ENCODE measurements at regions of chr1 and their contacts with region 1.

Region 1: DNA sequence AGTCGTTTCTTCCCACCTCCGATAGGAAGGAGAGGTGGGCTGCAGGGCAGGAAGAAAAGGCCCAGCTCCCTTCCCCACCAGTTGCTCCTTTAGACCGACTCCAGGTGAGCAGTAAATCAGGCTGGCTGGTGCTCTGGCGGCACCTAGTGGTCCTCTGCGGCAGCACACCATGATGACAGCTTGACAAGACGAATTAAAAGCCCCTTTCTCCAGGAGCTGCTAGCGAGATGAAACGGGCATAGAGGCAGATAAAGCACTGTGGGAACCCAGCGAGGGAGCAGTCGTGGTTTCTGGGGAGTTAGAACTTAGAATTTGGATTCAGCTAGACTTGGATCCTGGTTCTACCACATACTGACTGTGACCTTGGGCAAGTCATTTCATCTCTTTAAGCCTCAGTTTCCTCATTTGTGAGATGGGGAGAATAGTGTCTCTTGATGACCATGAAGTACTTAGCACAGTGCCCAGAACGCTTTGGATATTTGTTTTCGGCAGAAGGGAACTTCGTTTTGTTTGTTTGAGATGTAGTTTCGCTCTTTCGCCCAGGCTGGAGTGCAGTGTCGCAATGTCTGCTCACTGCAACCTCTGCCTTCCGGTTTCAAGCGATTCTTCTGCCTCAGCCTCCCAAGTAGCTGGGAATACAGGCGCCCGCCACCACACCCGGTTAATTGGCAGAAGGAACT is 21.8 kb upstream of the COL9A2 start:
- DNase-seq: peak; percentile 92
- ATAC-seq: peak; percentile 98
- H3K4me3 ChIP-seq: peak overlapping the region in 3 of 5 experiments; percentile 3 to 46 (median 6)
- H3K4me3 Mint-ChIP-seq: peak overlapping the region; percentile 38
- H3K27ac ChIP-seq: no peak overlapping the region
- H3K27ac Mint-ChIP-seq: peak overlapping the region; percentile 28
- H3K4me1 ChIP-seq: peaks cover 25 to 34% of the 10 kb centered on the region in 2 donors
- H3K4me1 Mint-ChIP-seq: peaks cover 39% of the 10 kb centered on the region
- H3K27me3 ChIP-seq: no peaks in the 10 kb centered on the region
- H3K27me3 Mint-ChIP-seq: no peaks in the 10 kb centered on the region
- CTCF ChIP-seq: peak; percentile 98

Region 2: GRCh38 chr1:40090652-40091355 is 248.1 kb before region 1 on chr1:
- CTCF ChIA-PET with region 1: interaction called, 111 read pairs
- POLR2A ChIA-PET with region 1: no interaction called
- intact Hi-C with region 1: no loop called
- DNase-seq: no peak
- ATAC-seq: no peak
- H3K4me3 ChIP-seq: no peak overlapping the region
- H3K4me3 Mint-ChIP-seq: no peak overlapping the region
- H3K27ac ChIP-seq: no peak overlapping the region
- H3K27ac Mint-ChIP-seq: no peak overlapping the region
- H3K4me1 ChIP-seq: peaks cover under 1 to 2% of the 10 kb centered on the region in 2 donors
- H3K4me1 Mint-ChIP-seq: peaks cover 5% of the 10 kb centered on the region
- H3K27me3 ChIP-seq: no peaks in the 10 kb centered on the region
- H3K27me3 Mint-ChIP-seq: no peaks in the 10 kb centered on the region
- CTCF ChIP-seq: no peak

Region 3: DNA sequence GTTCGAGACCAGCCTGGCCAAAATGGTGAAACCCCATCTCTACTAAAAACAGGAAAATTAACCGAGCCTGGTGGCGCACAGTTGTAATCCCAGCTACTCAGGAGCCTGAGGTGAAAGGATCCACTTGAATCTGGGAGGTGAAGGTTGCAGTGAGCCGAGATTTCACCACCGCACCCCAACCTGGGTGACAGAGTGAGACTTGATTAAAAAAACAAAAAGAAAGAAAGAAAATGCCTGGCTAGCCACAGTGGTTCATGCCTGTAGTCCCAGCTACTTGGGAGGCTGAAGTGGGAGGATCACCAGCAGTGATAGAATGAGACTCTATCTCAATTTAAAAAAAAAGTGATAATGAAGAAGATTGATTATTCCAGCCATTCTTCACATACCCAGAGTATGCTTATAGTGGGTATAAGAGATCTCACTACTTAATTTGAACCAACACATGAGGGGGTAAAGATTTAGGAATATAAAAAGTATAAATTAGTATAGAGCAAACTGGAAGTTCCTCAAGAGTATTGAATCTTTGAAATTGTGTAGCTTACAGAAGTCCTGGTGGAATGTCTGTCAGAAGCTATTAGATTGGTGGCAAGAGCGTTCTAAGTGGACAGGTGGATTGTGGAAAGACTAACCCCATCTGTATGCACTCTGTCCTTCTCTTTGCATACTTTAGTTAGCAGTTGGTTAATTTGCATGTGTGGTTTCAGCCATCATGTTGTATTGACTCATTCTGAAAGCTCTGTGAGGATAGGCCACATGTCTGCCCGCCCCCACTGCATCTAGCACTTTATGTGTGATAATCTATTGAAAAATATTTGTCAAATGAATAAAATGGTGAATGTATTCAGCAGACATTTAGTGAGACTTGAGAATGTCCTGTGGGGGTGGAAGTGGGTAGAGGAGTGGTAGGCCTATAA is 152.7 kb before region 1 on chr1:
- CTCF ChIA-PET with region 1: interaction called, 18 read pairs
- POLR2A ChIA-PET with region 1: no interaction called
- intact Hi-C with region 1: no loop called
- DNase-seq: peak; percentile 62
- ATAC-seq: peak; percentile 94
- H3K4me3 ChIP-seq: no peak overlapping the region
- H3K4me3 Mint-ChIP-seq: peak overlapping the region; percentile 60
- H3K27ac ChIP-seq: no peak overlapping the region
- H3K27ac Mint-ChIP-seq: no peak overlapping the region
- H3K4me1 ChIP-seq: peaks cover 18 to 20% of the 10 kb centered on the region in 2 donors
- H3K4me1 Mint-ChIP-seq: peaks cover 48% of the 10 kb centered on the region
- H3K27me3 ChIP-seq: no peaks in the 10 kb centered on the region
- H3K27me3 Mint-ChIP-seq: no peaks in the 10 kb centered on the region
- CTCF ChIP-seq: no peak

Region 4: DNA sequence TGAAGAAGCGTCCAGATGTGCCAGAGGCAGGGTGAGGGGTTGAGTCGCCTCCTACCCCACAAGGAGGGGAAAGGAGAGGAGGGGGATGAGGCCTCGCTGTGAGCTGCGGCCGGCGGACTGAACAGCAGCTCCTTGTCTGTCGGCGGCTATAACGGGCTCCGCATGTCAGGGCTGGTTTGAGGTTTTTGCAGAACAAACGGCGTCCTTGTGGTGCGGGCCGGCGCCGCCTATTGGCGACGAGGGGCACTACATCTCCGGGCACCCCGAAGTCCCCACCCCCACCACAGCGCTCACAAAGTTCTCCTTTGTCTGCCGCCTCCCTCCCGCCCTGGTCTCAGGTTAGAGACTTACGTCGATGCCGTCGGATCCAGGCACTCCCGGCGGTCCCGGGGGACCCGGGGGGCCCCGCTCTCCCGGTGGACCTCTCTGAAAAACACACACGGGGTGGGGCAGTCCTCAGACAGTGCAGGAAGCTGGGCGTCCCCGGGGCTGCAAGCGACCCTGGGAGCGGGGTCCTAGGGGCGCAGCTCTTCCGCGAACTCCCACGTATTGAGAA is 23.6 kb before region 1 on chr1:
- CTCF ChIA-PET with region 1: interaction called, 132 read pairs
- POLR2A ChIA-PET with region 1: interaction called, 16 read pairs
- intact Hi-C with region 1: loop called (anchors 1 kb)
- DNase-seq: peak; percentile 94
- ATAC-seq: peak; percentile 61
- H3K4me3 ChIP-seq: peak overlapping the region; percentile 43 to 78 (median 66)
- H3K4me3 Mint-ChIP-seq: peak overlapping the region; percentile 92
- H3K27ac ChIP-seq: peak overlapping the region in 1 of 2 donors; percentile 40
- H3K27ac Mint-ChIP-seq: peak overlapping the region; percentile 76
- H3K4me1 ChIP-seq: peaks cover 41 to 59% of the 10 kb centered on the region in 2 donors
- H3K4me1 Mint-ChIP-seq: peaks cover 57% of the 10 kb centered on the region
- H3K27me3 ChIP-seq: peaks cover 0 to 3% (median 1%) of the 10 kb centered on the region in 4 experiments
- H3K27me3 Mint-ChIP-seq: peaks cover 5% of the 10 kb centered on the region
- CTCF ChIP-seq: peak; percentile 95

Region 5: GRCh38 chr1:40385437-40386358 is 46.8 kb after region 1 on chr1:
- CTCF ChIA-PET with region 1: interaction called, 38 read pairs
- POLR2A ChIA-PET with region 1: interaction called, 7 read pairs
- intact Hi-C with region 1: no loop called
- DNase-seq: peak; percentile 94
- ATAC-seq: peak; percentile 73
- H3K4me3 ChIP-seq: peak overlapping the region; percentile 30 to 70 (median 31)
- H3K4me3 Mint-ChIP-seq: peak overlapping the region; percentile 87
- H3K27ac ChIP-seq: peak overlapping the region; percentile 99 to 100
- H3K27ac Mint-ChIP-seq: peak overlapping the region; percentile 97
- H3K4me1 ChIP-seq: peaks cover 94 to 98% of the 10 kb centered on the region in 2 donors
- H3K4me1 Mint-ChIP-seq: peaks cover 91% of the 10 kb centered on the region
- H3K27me3 ChIP-seq: no peaks in the 10 kb centered on the region
- H3K27me3 Mint-ChIP-seq: no peaks in the 10 kb centered on the region
- CTCF ChIP-seq: no peak

Region 6: GRCh38 chr1:40421431-40422384 is 82.8 kb after region 1 on chr1:
- CTCF ChIA-PET with region 1: interaction called, 10 read pairs
- POLR2A ChIA-PET with region 1: no interaction called
- intact Hi-C with region 1: no loop called
- DNase-seq: no peak
- ATAC-seq: no peak
- H3K4me3 ChIP-seq: no peak overlapping the region
- H3K4me3 Mint-ChIP-seq: no peak overlapping the region
- H3K27ac ChIP-seq: peak overlapping the region in 1 of 2 donors; percentile 34
- H3K27ac Mint-ChIP-seq: peak overlapping the region; percentile 74
- H3K4me1 ChIP-seq: peaks cover 19 to 31% of the 10 kb centered on the region in 2 donors
- H3K4me1 Mint-ChIP-seq: peaks cover 44% of the 10 kb centered on the region
- H3K27me3 ChIP-seq: no peaks in the 10 kb centered on the region
- H3K27me3 Mint-ChIP-seq: no peaks in the 10 kb centered on the region
- CTCF ChIP-seq: no peak

Measured in B cell (primary cell).